K562 (cell line): ENCODE measurements at regions of chr6 and their contacts with region 1.

Region 1: GRCh38 chr6:41914869-41915530 is 5.9 kb downstream of the MED20 start:
- DNase-seq: no peak
- ATAC-seq: peak; percentile 14; the same call in 1 of the 3 replicates
- H3K4me3 ChIP-seq: no peak overlapping the region
- H3K27ac ChIP-seq: no peak overlapping the region; the same call in 2 of the 3 replicates
- H3K4me1 ChIP-seq: peaks cover 3 to 12% of the 10 kb centered on the region in 2 experiments; a peak in 4 of 5 replicates
- H3K27me3 ChIP-seq: no peaks in the 10 kb centered on the region
- CTCF ChIP-seq: no peak
- EP300 ChIP-seq: no peak
- POLR2A ChIP-seq: no peak
- RAD21 ChIP-seq: no peak

Region 2: DNA sequence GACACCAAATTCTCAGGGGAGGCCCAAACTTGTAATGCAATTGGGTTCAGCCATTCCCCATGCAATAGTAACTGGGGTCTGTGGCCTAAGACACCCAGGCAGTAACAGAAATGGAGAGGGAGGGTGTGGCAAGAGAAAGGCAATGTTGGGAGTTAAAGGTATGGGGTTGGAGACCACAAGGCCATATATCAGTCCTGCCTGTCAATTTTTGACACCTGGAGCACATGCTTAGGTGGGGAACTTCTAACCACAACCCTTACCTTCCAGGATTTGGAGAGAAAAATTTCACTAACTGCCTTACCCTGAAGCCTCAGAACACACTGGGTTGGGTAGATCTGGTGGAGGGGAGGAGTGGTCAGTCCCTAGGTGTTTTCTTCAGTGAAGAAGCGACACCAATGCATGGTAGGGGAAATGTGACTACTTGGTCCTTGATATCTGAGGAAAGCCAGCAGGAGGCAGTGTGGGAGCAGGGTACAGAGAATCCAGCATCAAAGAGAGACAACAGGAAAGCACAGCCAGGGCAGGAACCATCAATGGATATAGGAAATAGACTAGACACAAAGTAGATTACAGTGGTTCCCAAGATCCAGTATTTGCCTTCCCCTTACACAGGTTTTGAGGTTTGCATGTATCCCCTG is 13.0 kb before region 1 on chr6:
- CTCF ChIA-PET with region 1: no interaction called
- POLR2A ChIA-PET with region 1: interaction called, 16 read pairs
- in situ Hi-C with region 1: no loop called
- intact Hi-C with region 1: no loop called
- DNase-seq: peak; percentile 47 to 84 (median 66)
- ATAC-seq: peak; percentile 96
- H3K4me3 ChIP-seq: no peak overlapping the region
- H3K27ac ChIP-seq: no peak overlapping the region; the same call in 2 of the 3 replicates
- H3K4me1 ChIP-seq: peaks cover 0 to 2% of the 10 kb centered on the region in 2 experiments; a peak in 1 of 5 replicates
- H3K27me3 ChIP-seq: no peaks in the 10 kb centered on the region
- CTCF ChIP-seq: peak; percentile 85 to 96 (median 87)
- EP300 ChIP-seq: 0 out of 2 replicates have a peak, but pooled peaks have one; percentile 15
- POLR2A ChIP-seq: no peak
- RAD21 ChIP-seq: peak; percentile 96 to 98